ENCODE measurements at regions of chr3 and their contacts with region 1.

Region 1: DNA sequence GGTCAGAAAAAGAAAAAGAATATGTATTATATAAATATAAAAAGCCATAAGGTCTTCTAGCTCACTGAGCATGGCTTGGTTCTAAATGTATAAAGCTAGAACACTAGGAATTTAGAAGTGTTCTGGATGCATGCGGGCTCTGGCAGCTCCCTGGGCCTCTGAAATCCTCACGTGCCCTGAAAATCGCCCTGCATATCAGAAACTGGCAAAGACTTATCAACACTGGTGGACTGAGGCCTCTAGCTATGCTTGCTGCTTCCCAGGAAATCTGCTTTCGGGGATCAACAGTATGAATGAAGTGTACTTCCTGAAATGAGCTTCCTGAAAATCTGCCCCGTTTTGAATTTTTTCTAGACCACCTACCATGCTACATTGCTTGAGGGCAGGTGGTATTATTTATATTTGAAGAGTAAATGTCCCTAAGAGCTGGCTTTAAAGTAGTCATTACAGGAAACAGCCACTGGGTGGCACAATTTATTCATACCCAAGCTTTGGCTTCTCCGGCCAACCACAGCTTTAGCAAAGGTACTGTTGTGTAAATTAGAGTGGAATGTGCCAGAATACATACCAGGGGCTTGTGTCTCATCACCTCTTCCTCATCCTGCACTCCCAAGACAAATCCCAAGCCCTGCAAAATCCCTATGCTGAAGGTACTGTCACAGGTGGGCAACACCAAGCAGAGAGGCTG is 17.7 kb downstream of the CRTAP start:
- DNase-seq: no peak
- ATAC-seq: peak; percentile 82
- H3K4me3 Mint-ChIP-seq: no peak overlapping the region
- H3K27ac Mint-ChIP-seq: no peak overlapping the region
- H3K4me1 Mint-ChIP-seq: peaks cover 3% of the 10 kb centered on the region
- H3K27me3 Mint-ChIP-seq: no peaks in the 10 kb centered on the region
- CTCF ChIP-seq: peak; percentile 34

Region 2: DNA sequence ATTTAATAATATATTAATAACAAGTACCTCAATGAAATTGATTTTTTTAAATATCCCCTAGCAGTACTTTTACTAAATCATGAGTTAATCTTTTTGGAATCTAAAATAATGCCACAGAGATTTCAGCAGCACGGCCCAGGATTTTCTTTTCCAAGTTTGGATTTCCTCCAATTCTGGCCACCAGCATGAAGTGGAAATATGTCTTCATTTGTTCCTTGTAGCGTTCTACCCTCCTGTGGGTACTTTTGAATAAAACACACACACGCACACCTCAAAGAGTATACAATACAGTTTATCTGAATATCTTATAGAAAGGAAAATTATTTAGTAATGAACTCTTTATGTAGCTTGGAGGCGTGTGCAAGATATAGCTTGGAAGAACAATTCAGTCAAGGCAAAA is 1723.8 kb before region 1 on chr3:
- CTCF ChIA-PET with region 1: no interaction called
- POLR2A ChIA-PET with region 1: no interaction called
- intact Hi-C with region 1: no loop called
- DNase-seq: no peak
- ATAC-seq: no peak
- H3K4me3 Mint-ChIP-seq: no peak overlapping the region
- H3K27ac Mint-ChIP-seq: no peak overlapping the region
- H3K4me1 Mint-ChIP-seq: no peaks in the 10 kb centered on the region
- H3K27me3 Mint-ChIP-seq: peaks cover 10% of the 10 kb centered on the region
- CTCF ChIP-seq: no peak

Region 3: DNA sequence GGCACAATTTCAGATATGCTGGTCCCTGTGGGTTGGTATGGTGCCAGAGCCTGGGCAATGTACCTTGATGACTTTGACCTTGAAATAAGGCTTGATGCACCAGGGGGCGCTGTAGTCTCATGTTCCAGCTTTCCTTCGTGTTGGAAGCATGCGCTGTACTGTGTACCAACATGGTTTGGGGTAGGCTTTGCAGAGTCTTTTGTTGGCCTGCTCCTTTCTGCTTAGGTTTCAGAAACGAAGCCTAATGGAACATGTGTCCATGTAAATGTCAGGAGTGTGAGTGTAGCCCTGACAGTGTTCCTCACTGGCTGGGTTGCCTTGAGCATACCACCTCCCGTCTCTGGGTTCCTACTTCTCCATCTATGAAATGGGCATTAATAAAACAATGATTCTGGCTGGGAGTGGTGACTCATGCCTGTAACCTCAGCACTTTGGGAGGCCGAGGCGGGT is 183.7 kb before region 1 on chr3:
- CTCF ChIA-PET with region 1: interaction called, 10 read pairs
- POLR2A ChIA-PET with region 1: no interaction called
- intact Hi-C with region 1: loop called (anchors 2 kb)
- DNase-seq: peak; percentile 67
- ATAC-seq: peak; percentile 86
- H3K4me3 Mint-ChIP-seq: no peak overlapping the region
- H3K27ac Mint-ChIP-seq: no peak overlapping the region
- H3K4me1 Mint-ChIP-seq: peaks cover 9% of the 10 kb centered on the region
- H3K27me3 Mint-ChIP-seq: no peaks in the 10 kb centered on the region
- CTCF ChIP-seq: no peak

Region 4: DNA sequence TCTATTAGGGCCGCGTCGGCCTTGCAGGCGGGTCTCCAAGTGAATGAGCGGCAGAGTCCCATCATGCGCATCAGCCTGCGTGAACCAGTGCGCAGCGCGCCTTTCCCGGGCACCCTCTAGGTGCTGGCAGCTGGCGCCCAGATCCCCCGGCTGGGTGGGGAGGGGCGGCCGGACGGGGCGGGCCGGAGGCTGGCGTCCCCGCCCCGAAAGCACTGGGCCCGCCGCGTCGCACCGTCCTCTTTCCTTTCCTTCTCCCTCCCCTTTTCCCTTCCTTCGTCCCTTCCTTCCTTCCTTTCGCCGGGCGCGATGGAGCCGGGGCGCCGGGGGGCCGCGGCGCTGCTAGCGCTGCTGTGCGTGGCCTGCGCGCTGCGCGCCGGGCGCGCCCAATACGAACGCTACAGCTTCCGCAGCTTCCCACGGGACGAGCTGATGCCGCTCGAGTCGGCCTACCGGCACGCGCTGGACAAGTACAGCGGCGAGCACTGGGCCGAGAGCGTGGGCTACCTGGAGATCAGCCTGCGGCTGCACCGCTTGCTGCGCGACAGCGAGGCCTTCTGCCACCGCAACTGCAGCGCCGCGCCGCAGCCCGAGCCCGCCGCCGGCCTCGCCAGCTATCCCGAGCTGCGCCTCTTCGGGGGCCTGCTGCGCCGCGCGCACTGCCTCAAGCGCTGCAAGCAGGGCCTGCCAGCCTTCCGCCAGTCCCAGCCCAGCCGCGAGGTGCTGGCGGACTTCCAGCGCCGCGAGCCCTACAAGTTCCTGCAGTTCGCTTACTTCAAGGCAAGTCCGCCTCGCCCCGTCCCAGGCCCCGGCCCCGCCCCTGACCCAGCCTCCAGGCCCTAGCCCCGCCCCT is 17.5 kb before region 1 on chr3 and contains the start of gene CRTAP:
- CTCF ChIA-PET with region 1: interaction called, 7 read pairs
- POLR2A ChIA-PET with region 1: interaction called, 6 read pairs
- intact Hi-C with region 1: loop called (anchors 2 kb)
- DNase-seq: peak; percentile 91
- ATAC-seq: peak; percentile 83
- H3K4me3 Mint-ChIP-seq: peak within 1 kb of the TSS; percentile 87
- H3K27ac Mint-ChIP-seq: peak within 1 kb of the TSS; percentile 85
- H3K4me1 Mint-ChIP-seq: peaks cover 50% of the 10 kb centered on the region
- H3K27me3 Mint-ChIP-seq: no peaks in the 10 kb centered on the region
- CTCF ChIP-seq: no peak
- total RNA-seq, gene CRTAP: 36.5 and 36.6 TPM in 2 replicates

Region 5: GRCh38 chr3:33146791-33147445 is 15.4 kb after region 1 on chr3:
- CTCF ChIA-PET with region 1: interaction called, 11 read pairs
- POLR2A ChIA-PET with region 1: no interaction called
- intact Hi-C with region 1: no loop called
- DNase-seq: no peak
- ATAC-seq: no peak
- H3K4me3 Mint-ChIP-seq: no peak overlapping the region
- H3K27ac Mint-ChIP-seq: no peak overlapping the region
- H3K4me1 Mint-ChIP-seq: peaks cover 3% of the 10 kb centered on the region
- H3K27me3 Mint-ChIP-seq: no peaks in the 10 kb centered on the region
- CTCF ChIP-seq: no peak

Region 6: GRCh38 chr3:33250712-33251111 is 119.2 kb after region 1 on chr3:
- CTCF ChIA-PET with region 1: interaction called, 5 read pairs
- POLR2A ChIA-PET with region 1: no interaction called
- intact Hi-C with region 1: loop called (anchors 1 kb)
- DNase-seq: no peak
- ATAC-seq: no peak
- H3K4me3 Mint-ChIP-seq: no peak overlapping the region
- H3K27ac Mint-ChIP-seq: no peak overlapping the region
- H3K4me1 Mint-ChIP-seq: no peaks in the 10 kb centered on the region
- H3K27me3 Mint-ChIP-seq: peaks cover 8% of the 10 kb centered on the region
- CTCF ChIP-seq: no peak

Region 7: GRCh38 chr3:33318709-33319380 is 187.4 kb after region 1 on chr3:
- CTCF ChIA-PET with region 1: interaction called, 3 read pairs
- POLR2A ChIA-PET with region 1: no interaction called
- intact Hi-C with region 1: loop called (anchors 1 kb)
- DNase-seq: no peak
- ATAC-seq: no peak
- H3K4me3 Mint-ChIP-seq: no peak overlapping the region
- H3K27ac Mint-ChIP-seq: no peak overlapping the region
- H3K4me1 Mint-ChIP-seq: no peaks in the 10 kb centered on the region
- H3K27me3 Mint-ChIP-seq: peaks cover 24% of the 10 kb centered on the region
- CTCF ChIP-seq: no peak

Region 8: GRCh38 chr3:33372218-33373081 is 241.0 kb after region 1 on chr3:
- CTCF ChIA-PET with region 1: interaction called, 119 read pairs
- POLR2A ChIA-PET with region 1: interaction called, 8 read pairs
- intact Hi-C with region 1: loop called (anchors 1 kb)
- DNase-seq: no peak
- ATAC-seq: peak; percentile 54
- H3K4me3 Mint-ChIP-seq: no peak overlapping the region
- H3K27ac Mint-ChIP-seq: no peak overlapping the region
- H3K4me1 Mint-ChIP-seq: peaks cover 2% of the 10 kb centered on the region
- H3K27me3 Mint-ChIP-seq: peaks cover 4% of the 10 kb centered on the region
- CTCF ChIP-seq: peak; percentile 80